T-cell (primary cell): ENCODE measurements at regions of chr17 and their contacts with region 1.

Region 1: DNA sequence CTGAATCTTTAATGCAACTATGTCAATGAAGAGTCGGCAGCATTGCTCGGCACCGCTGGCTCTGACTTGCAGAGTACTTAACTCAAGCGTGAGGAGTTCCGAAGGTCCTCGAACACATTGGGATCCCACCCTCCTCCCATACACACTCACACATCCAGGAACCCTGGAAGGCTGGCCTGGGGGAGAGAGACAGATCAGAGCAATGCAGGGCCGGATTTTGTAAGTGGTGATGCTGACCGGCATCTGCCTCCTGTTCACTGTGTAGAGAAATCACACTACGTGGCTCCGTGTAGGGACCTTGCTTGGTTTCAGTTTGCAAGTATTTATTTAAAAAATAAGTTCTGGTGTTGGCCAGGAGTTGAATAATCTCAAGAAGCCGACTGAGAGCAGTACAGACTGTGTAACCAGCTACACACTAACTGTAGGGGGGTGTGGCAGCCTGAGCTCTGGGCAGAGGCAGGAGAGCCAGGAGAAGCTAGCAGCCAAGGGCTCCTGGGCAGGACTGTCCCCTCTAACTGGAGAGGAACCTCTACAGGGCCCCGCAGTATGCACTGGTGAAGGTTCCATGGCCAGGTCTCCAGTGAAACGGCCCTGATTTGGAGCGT is 190.2 kb upstream of the TNRC6C start:
- DNase-seq: no peak
- ATAC-seq: no peak
- H3K4me3 ChIP-seq: no peak overlapping the region
- H3K4me3 Mint-ChIP-seq: no peak overlapping the region
- H3K27ac ChIP-seq: no peak overlapping the region
- H3K27ac Mint-ChIP-seq: no peak overlapping the region
- H3K4me1 ChIP-seq: peaks cover 0 to 14% of the 10 kb centered on the region in 2 experiments
- H3K4me1 Mint-ChIP-seq: peaks cover 12 to 14% (median 12%) of the 10 kb centered on the region in 3 donors
- H3K27me3 ChIP-seq: peaks cover 0 to 7% of the 10 kb centered on the region in 2 experiments
- H3K27me3 Mint-ChIP-seq: peaks cover 0 to 10% of the 10 kb centered on the region in 2 donors

Region 2: DNA sequence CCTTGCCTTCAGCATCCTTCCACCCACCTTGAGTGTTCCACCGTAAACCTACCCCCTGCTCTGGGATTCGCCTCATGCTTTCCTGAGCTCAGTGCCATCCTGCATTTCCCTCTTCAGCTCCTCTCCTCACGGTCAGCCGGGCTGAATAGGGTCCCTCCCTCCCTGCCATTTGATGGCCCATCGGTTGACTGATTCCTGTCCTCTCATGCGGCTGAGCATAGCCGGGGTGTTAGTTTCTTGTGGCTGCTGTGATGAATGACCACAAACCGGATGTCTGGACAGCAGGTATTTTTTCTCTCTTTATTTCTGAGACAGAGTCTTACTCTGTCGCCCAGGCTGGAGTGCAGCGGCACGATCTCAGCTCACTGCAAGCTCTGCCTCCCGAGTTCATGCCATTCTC is 944.3 kb before region 1 on chr17:
- CTCF ChIA-PET with region 1: no interaction called
- POLR2A ChIA-PET with region 1: interaction called in 1 of 2 experiments, 12 read pairs
- DNase-seq: no peak
- ATAC-seq: no peak
- H3K4me3 ChIP-seq: no peak overlapping the region
- H3K4me3 Mint-ChIP-seq: no peak overlapping the region
- H3K27ac ChIP-seq: no peak overlapping the region
- H3K27ac Mint-ChIP-seq: no peak overlapping the region
- H3K4me1 ChIP-seq: peaks cover 0 to 8% of the 10 kb centered on the region in 2 experiments
- H3K4me1 Mint-ChIP-seq: peaks cover 0 to 9% (median 2%) of the 10 kb centered on the region in 3 donors
- H3K27me3 ChIP-seq: peaks cover 0 to 20% of the 10 kb centered on the region in 2 experiments
- H3K27me3 Mint-ChIP-seq: peaks cover 0 to 2% of the 10 kb centered on the region in 2 donors

Region 3: GRCh38 chr17:77182205-77183172 is 585.9 kb before region 1 on chr17:
- CTCF ChIA-PET with region 1: no interaction called
- POLR2A ChIA-PET with region 1: no interaction called
- DNase-seq: no peak
- ATAC-seq: peak in 3 of 4 experiments; percentile 43 to 53 (median 46)
- H3K4me3 ChIP-seq: no peak overlapping the region
- H3K4me3 Mint-ChIP-seq: peak overlapping the region; percentile 35 to 67 (median 49)
- H3K27ac ChIP-seq: peak overlapping the region; percentile 63
- H3K27ac Mint-ChIP-seq: peak overlapping the region; percentile 93 to 95
- H3K4me1 ChIP-seq: peaks cover 31 to 42% of the 10 kb centered on the region in 2 experiments
- H3K4me1 Mint-ChIP-seq: peaks cover 40 to 48% (median 44%) of the 10 kb centered on the region in 3 donors
- H3K27me3 ChIP-seq: no peaks in the 10 kb centered on the region
- H3K27me3 Mint-ChIP-seq: no peaks in the 10 kb centered on the region

Region 4: GRCh38 chr17:77968788-77969187 is 200.4 kb after region 1 on chr17:
- CTCF ChIA-PET with region 1: no interaction called
- POLR2A ChIA-PET with region 1: no interaction called
- DNase-seq: no peak
- ATAC-seq: no peak
- H3K4me3 ChIP-seq: no peak overlapping the region
- H3K4me3 Mint-ChIP-seq: peak overlapping the region in 1 of 3 donors; percentile 41
- H3K27ac ChIP-seq: no peak overlapping the region
- H3K27ac Mint-ChIP-seq: no peak overlapping the region
- H3K4me1 ChIP-seq: peaks cover 15 to 49% of the 10 kb centered on the region in 2 experiments
- H3K4me1 Mint-ChIP-seq: peaks cover 91 to 98% (median 93%) of the 10 kb centered on the region in 3 donors
- H3K27me3 ChIP-seq: no peaks in the 10 kb centered on the region
- H3K27me3 Mint-ChIP-seq: no peaks in the 10 kb centered on the region